HEK293 (cell line): ENCODE measurements at regions of chr6 and their contacts with region 1.

Region 1: DNA sequence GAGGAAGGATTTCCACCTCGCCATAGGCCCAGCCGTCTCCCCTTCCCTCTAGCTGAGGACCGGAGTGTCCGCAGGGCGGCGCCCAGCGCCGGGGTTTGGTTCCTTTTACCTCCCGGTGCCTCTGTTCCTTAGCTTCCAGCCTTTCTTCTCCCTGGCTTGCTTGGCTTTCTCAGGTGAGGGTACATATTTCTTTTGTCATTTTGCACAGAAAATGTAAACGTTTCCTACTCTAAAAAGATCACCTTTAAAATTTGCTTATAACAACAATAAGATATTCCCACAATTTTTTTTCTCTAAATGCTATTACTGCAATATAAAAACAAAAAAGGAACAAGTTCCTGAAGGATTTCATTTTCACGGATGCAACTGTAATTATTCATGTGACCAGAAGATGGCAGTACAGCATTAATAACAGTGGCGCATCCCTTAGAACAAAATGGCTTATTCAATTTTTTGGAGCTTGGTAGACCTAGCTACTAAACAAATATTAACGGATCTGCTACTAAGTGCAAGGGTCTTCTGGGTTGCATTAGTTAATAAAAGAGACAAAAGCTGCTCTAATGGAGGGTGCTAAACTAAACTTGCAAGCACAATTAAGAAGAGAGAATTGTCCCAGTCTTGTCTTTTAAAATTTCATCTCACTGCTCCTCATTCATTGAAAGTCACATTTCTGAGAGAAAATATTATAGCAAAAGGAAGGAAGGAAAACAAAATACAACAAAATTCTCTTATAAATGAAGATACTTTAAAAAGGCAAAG is 172.9 kb downstream of the ADGRG6 start:
- H3K4me3 ChIP-seq: no peak overlapping the region
- H3K27ac ChIP-seq: no peak overlapping the region
- H3K4me1 ChIP-seq: no peaks in the 10 kb centered on the region
- CTCF ChIP-seq: peak; percentile 60; the same call in 1 of the 2 replicates

Region 2: DNA sequence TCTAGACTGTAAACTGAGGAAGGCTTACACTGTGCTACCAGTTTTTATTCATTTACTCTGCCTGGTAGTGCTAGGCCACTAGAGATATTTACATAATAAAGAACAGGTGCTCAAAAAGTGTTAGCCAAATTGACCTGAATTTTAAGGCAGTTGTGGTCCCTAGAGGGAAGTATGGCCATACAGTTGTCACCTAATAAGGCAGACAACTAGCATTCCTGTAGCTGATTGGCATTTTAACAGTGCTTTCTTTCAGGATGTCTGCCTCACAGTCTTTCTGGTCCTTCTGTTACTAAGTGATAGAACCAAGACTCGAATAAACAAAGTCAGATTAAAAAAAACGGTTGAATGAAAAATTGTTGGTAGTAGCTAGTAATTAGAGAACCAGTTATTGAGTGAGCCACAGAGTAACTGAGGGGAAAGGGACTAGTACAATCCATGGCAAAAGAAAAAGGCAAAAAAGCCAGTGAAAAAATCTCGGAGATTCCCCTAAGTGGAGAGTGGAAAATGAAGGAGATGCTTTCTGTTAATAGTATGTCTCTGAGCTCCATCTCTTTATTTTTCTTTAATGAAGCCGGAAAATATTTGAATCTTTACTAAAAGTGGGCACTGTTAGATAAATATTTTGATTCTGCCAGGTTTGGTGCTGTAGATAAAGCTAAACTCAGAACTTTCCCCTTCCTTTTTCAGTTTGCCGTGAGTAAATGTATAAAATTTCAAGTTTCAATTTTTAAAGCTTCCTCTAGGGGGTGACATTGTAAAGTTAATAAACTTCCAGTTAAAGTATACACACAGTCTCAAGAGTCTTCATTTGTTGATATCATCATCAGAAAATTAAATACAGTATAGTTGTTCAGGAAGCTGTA is 318.6 kb before region 1 on chr6:
- CTCF ChIA-PET with region 1: interaction called, 65 read pairs
- POLR2A ChIA-PET with region 1: no interaction called
- H3K4me3 ChIP-seq: no peak overlapping the region
- H3K27ac ChIP-seq: no peak overlapping the region
- H3K4me1 ChIP-seq: peaks cover 9% of the 10 kb centered on the region; the same call in 1 of the 2 replicates
- CTCF ChIP-seq: no peak

Region 3: GRCh38 chr6:142452993-142453392 is 21.7 kb before region 1 on chr6:
- CTCF ChIA-PET with region 1: interaction called, 11 read pairs
- POLR2A ChIA-PET with region 1: no interaction called
- H3K4me3 ChIP-seq: no peak overlapping the region
- H3K27ac ChIP-seq: no peak overlapping the region
- H3K4me1 ChIP-seq: no peaks in the 10 kb centered on the region
- CTCF ChIP-seq: no peak

Region 4: DNA sequence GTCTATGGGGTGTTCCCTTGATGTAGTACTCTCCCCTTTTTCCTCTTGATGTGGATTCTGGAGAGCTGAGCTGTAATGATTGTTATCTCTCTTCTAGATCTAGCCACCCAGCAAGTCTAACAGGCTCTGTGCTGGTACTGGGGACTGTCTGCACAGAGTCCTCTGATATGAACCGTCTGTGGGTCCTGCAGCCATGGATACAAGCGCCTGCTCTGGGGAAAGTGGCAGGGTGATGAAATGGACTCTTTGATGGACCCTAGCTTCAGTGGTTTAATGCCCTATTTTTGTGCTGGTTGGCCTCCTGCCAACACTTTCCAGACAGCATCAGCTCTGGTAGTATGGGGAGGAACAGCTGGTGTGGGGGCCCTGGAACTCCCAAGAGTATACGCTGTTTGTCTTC is 43.4 kb after region 1 on chr6:
- CTCF ChIA-PET with region 1: interaction called, 13 read pairs
- POLR2A ChIA-PET with region 1: no interaction called
- H3K4me3 ChIP-seq: no peak overlapping the region
- H3K27ac ChIP-seq: no peak overlapping the region
- H3K4me1 ChIP-seq: no peaks in the 10 kb centered on the region
- CTCF ChIP-seq: no peak

Region 5: DNA sequence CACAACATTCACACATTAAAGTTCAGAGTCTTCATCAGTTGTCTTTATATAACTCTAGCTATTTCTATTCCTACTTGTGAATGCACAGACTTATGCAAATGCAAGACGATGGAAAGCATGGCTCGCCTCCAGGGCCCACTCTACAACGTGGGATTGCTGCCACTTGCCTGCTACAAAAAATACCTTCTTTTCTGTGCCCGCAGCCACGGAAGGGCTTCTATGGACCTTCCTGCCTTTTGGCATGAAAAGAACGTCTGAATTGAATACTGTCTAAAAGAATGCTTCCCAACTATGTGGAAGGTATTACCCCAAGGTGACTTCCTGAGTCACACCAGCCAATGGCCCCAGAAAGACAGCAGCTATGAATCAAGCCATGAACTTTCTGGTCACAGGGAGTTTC is 209.0 kb after region 1 on chr6:
- CTCF ChIA-PET with region 1: interaction called, 11 read pairs
- POLR2A ChIA-PET with region 1: no interaction called
- H3K4me3 ChIP-seq: no peak overlapping the region
- H3K27ac ChIP-seq: no peak overlapping the region
- H3K4me1 ChIP-seq: no peaks in the 10 kb centered on the region
- CTCF ChIP-seq: no peak

Region 6: DNA sequence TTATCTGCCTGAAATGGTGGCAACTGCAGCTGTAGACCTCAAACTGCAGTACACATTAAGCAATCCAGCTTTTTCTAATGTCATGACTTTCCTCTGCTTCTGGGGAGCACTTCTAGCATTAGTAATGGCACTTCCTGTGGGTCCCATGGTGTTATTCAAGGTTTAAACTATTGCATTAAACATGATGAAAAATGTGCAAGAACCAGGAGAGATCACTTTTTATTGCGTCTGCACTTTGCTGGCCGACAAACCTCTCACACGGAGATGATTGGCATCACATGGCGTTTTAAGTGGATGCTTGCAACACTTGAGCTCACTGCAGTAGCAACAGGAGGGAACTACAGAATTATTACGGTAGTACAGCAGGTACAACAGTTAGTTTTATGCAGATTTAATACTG is 321.9 kb after region 1 on chr6:
- CTCF ChIA-PET with region 1: no interaction called
- POLR2A ChIA-PET with region 1: no interaction called
- H3K4me3 ChIP-seq: no peak overlapping the region
- H3K27ac ChIP-seq: no peak overlapping the region
- H3K4me1 ChIP-seq: no peaks in the 10 kb centered on the region
- CTCF ChIP-seq: no peak